Naive thymus-derived CD4-positive, alpha-beta T cell (primary cell): ENCODE measurements at regions of chr7 and their contacts with region 1.

Region 1: GRCh38 chr7:133530682-133531081 is 277.8 kb downstream of the EXOC4 start:
- DNase-seq: no peak
- ATAC-seq: no peak
- H3K4me3 ChIP-seq: no peak overlapping the region
- H3K4me3 Mint-ChIP-seq: no peak overlapping the region
- H3K27ac ChIP-seq: no peak overlapping the region
- H3K27ac Mint-ChIP-seq: no peak overlapping the region
- H3K4me1 ChIP-seq: no peaks in the 10 kb centered on the region
- H3K4me1 Mint-ChIP-seq: peaks cover 0 to 7% (median 0%) of the 10 kb centered on the region in 7 donors
- H3K27me3 ChIP-seq: no peaks in the 10 kb centered on the region
- H3K27me3 Mint-ChIP-seq: no peaks in the 10 kb centered on the region

Region 2: GRCh38 chr7:133481676-133482075 is 49.0 kb before region 1 on chr7:
- CTCF ChIA-PET with region 1: no interaction called
- POLR2A ChIA-PET with region 1: no interaction called
- intact Hi-C with region 1: loop called in 1 of 2 experiments (anchors 5 kb)
- DNase-seq: no peak
- ATAC-seq: no peak
- H3K4me3 ChIP-seq: no peak overlapping the region
- H3K4me3 Mint-ChIP-seq: peak overlapping the region in 1 of 10 donors; percentile 73
- H3K27ac ChIP-seq: no peak overlapping the region
- H3K27ac Mint-ChIP-seq: peak overlapping the region in 4 of 9 donors; percentile 15 to 52 (median 32)
- H3K4me1 ChIP-seq: peaks cover 21 to 30% of the 10 kb centered on the region in 2 donors
- H3K4me1 Mint-ChIP-seq: peaks cover 25 to 80% (median 62%) of the 10 kb centered on the region in 7 donors
- H3K27me3 ChIP-seq: no peaks in the 10 kb centered on the region
- H3K27me3 Mint-ChIP-seq: no peaks in the 10 kb centered on the region